Right ventricle myocardium inferior (tissue), 1 donor: ENCODE measurements at regions of chr3 and their contacts with region 1.

Region 1: DNA sequence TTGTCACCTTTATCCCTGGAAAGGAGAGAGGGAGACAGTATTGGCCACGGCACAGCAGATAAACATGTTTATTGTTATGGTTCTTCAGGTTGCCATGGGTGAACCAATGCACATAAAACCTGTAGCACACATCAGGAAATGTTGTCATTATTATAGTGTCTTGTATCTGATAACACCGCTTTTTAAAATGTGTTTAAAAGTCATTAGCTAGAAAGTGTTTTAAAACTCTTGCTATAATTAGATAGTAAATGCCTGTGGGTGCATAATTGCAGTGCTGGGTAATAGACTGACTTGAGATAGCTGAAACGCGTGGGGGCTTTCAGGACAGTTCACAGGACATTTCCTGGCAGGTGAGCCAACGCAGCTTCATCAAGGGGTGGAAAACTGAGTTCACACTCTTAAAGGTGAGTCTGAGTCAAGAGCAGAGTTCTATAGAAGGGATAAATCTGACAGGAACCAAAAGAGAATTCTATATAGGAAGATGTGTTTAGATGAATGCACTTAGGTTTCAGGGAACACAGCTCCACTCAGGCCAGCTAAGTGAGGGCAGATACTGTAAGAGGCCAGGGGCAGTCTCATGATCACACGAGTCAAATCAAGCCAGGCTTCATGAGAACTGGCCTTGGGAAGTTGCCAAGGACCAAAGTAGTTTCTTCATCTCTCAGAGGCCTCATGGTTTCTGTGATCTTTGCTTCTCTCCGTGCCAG is 35.6 kb upstream of the PPP4R2 start:
- DNase-seq: no peak
- ATAC-seq: peak; percentile 90

Region 2: DNA sequence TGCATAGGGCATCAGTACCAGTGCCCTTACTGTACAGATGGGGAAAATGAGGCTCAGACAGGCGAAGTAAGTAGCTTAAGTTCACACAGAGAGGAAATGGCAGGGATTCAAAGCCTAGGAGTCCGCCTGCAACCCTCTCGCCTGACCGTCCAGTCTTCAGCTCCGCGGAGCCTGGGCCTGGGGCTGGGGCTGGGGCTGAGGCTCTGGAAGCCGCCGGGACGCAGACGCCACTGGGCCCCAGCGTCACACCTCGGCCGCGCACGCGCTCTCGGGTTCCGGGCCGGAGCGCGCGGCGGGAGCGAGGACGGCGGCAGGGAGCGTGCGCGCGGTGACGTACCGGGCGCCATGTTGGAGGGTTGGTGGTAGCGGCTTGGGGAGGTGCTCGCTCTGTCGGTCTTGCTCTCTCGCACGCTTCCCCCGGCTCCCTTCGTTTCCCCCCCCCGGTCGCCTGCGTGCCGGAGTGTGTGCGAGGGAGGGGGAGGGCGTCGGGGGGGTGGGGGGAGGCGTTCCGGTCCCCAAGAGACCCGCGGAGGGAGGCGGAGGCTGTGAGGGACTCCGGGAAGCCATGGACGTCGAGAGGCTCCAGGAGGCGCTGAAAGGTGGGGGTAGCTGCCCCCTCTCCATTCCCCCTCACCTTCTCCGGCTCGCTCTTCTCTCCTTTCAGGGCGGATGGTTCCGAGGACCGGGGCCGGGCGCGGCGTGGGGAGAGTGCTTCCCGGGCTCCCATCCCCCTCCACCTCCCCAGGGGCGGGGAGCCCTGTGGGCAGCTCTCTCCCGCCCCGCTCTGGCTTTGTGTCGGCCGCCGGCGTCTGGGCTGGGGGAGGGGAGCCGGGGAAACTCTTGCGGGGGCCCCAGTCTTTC is 35.7 kb after region 1 on chr3 and contains the start of gene PPP4R2:
- intact Hi-C with region 1: loop called (anchors 2 kb)
- DNase-seq: peak; percentile 95
- ATAC-seq: peak; percentile 97
- total RNA-seq, gene PPP4R2: 52.8 TPM

Region 3: GRCh38 chr3:73007992-73008712 is 47.2 kb after region 1 on chr3:
- intact Hi-C with region 1: no loop called
- DNase-seq: no peak
- ATAC-seq: no peak

Region 4: DNA sequence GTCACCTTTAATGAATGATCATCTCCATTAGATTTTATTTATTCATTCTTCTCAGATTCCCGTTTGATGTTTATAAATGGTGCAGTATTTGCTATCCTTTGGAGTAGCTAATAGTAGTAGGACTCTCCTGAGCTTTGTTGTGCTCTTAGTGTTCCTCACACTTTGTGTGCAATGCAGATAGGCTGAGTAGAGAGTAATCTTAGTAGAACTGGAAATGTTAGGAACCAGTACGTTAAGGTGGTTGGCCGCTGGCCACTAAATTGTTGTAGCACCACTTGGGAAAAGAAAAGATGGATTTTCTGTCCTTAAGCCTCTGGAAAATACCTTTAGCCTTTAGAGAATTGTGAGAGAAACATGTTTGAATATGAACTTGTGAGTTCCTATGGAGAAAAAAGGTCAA is 80.6 kb after region 1 on chr3:
- intact Hi-C with region 1: loop called (anchors 5 kb)
- DNase-seq: no peak
- ATAC-seq: peak; percentile 38

Region 5: GRCh38 chr3:73061416-73061815 is 100.5 kb after region 1 on chr3 and contains the start of gene EBLN2:
- intact Hi-C with region 1: loop called (anchors 1 kb)
- DNase-seq: no peak
- ATAC-seq: peak; percentile 93
- total RNA-seq, gene EBLN2: 0.87 TPM